H1 (cell line): ENCODE measurements at regions of chr11 and their contacts with region 1.

Region 1: GRCh38 chr11:63974259-63975143 is at the start of gene COX8A:
- DNase-seq: peak; percentile 91 to 98
- H3K4me3 ChIP-seq: peak within 1 kb of the TSS; percentile 90 to 99 (median 96)
- H3K27ac ChIP-seq: peak within 1 kb of the TSS; percentile 88
- H3K4me1 ChIP-seq: peaks cover 7 to 21% (median 14%) of the 10 kb centered on the region in 4 experiments
- H3K27me3 ChIP-seq: peaks cover 0 to 5% (median 2%) of the 10 kb centered on the region in 4 experiments; a peak in 3 of 7 replicates
- CTCF ChIP-seq: no peak
- EP300 ChIP-seq: peak in 1 of 2 experiments; percentile 68; a peak in 1 of 3 replicates
- POLR2A ChIP-seq: peak; percentile 56 to 84
- RAD21 ChIP-seq: no peak
- total RNA-seq, gene COX8A: 365 and 413 TPM in 2 replicates

Region 2: DNA sequence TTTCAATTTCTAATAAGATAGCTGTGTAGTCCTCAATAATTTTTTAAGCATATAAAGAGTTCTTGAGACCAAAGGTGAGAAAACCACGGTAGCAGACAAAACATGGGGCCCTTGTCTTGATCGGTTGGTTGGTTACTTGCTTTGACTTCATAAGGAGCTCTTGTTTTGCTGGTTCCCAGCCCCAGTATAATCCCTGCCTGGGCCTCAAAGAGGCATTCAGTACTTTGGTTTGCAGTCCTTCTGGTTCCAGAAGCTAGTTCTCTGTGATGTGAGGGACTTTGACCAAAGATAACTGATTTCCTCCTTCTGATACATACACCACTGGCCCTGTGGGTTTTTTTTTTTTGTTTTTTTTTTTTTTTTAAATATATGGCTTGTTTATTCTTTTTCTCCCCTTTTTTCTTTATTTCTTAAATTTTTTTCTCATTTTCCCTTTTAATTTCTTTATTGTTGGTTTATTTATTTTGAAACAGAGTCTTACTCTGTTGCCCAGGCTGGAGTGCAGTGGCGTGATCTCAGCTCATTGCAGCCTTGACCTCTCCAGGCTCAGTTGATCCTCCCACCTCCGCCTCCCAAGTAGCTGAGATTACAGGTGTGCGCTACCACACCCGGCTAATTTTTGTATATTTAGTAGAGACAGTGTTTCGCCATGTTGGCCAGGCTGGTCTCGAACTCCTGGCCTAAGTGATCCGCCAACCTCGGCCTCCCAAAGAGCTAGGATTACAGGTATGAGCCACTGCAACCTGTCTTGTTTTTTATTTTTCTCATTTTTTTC is 118.3 kb before region 1 on chr11:
- CTCF ChIA-PET with region 1: no interaction called
- POLR2A ChIA-PET with region 1: no interaction called
- DNase-seq: no peak
- H3K4me3 ChIP-seq: no peak overlapping the region
- H3K27ac ChIP-seq: no peak overlapping the region
- H3K4me1 ChIP-seq: peaks cover 0 to 5% (median 0%) of the 10 kb centered on the region in 4 experiments; a peak in 1 of 7 replicates
- H3K27me3 ChIP-seq: no peaks in the 10 kb centered on the region
- CTCF ChIP-seq: no peak
- EP300 ChIP-seq: no peak
- POLR2A ChIP-seq: no peak
- RAD21 ChIP-seq: no peak

Region 3: GRCh38 chr11:63866211-63866610 is 108.3 kb before region 1 on chr11:
- CTCF ChIA-PET with region 1: no interaction called
- POLR2A ChIA-PET with region 1: no interaction called
- DNase-seq: no peak
- H3K4me3 ChIP-seq: no peak overlapping the region
- H3K27ac ChIP-seq: no peak overlapping the region
- H3K4me1 ChIP-seq: peaks cover 0 to 16% (median 4%) of the 10 kb centered on the region in 4 experiments; a peak in 6 of 7 replicates
- H3K27me3 ChIP-seq: no peaks in the 10 kb centered on the region
- CTCF ChIP-seq: no peak
- EP300 ChIP-seq: no peak
- POLR2A ChIP-seq: no peak
- RAD21 ChIP-seq: no peak

Region 4: GRCh38 chr11:63961608-63962412 is 12.7 kb before region 1 on chr11:
- CTCF ChIA-PET with region 1: interaction called, 8 read pairs
- POLR2A ChIA-PET with region 1: interaction called, 29 read pairs
- DNase-seq: no peak
- H3K4me3 ChIP-seq: no peak overlapping the region
- H3K27ac ChIP-seq: no peak overlapping the region
- H3K4me1 ChIP-seq: no peaks in the 10 kb centered on the region; a peak in 1 of 7 replicates
- H3K27me3 ChIP-seq: peaks cover 0 to 10% (median 0%) of the 10 kb centered on the region in 4 experiments; a peak in 2 of 7 replicates
- CTCF ChIP-seq: no peak
- EP300 ChIP-seq: no peak
- POLR2A ChIP-seq: no peak
- RAD21 ChIP-seq: no peak

Region 5: DNA sequence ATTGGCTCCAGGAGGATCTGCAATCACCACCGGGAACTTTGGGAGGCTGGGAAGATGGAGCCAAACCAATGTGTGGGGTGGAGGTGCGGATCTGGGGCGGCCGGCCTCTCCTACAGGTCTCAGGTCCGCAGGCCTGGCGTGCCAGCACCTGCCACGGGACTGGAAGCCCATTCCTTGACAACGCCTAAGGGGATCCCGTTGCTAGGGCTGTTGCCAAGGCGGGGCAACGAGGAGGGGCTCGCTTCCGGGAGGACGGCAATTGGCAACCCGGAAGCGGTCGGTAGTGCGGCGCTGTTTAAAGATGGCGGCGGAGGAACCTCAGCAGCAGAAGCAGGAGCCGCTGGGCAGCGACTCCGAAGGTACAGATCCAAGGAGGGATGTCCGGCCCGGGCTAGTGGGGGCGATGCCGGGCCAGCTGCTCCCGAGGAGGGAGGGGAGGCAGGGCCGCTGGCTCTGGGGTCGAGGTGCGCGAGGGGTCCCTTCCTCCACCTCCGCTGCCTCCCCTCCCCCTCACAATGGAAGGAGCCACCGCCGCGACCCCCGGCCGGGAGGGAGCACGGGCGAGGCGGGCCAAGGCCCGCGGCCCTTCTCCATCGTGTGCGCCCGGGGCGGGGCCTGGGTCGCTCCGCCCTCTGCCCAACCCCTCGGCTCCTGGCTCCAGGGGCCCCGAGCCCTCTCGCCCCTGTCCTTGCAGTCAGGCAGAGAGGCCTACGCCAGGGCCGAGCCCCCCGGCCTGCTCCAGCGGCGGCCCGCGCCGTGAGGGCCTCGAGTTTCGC is 11.8 kb after region 1 on chr11 and contains the start of gene OTUB1:
- CTCF ChIA-PET with region 1: interaction called, 7 read pairs
- POLR2A ChIA-PET with region 1: interaction called, 24 read pairs
- DNase-seq: peak; percentile 92 to 96
- H3K4me3 ChIP-seq: peak within 1 kb of the TSS; percentile 63 to 86 (median 70)
- H3K27ac ChIP-seq: peak within 1 kb of the TSS; percentile 96
- H3K4me1 ChIP-seq: peaks cover 0 to 16% (median 9%) of the 10 kb centered on the region in 4 experiments; a peak in 6 of 7 replicates
- H3K27me3 ChIP-seq: no peaks in the 10 kb centered on the region
- CTCF ChIP-seq: peak in 1 of 3 experiments; percentile 19; a peak in 1 of 4 replicates
- EP300 ChIP-seq: no peak
- POLR2A ChIP-seq: peak; percentile 94 to 97
- RAD21 ChIP-seq: no peak
- total RNA-seq, gene OTUB1: 110 and 112 TPM in 2 replicates